Sciatic nerve (tissue), 2 donors: ENCODE measurements at regions of chrX and their contacts with region 1.

Region 1: GRCh38 chrX:100768679-100769338 is 36.9 kb upstream of the SYTL4 start:
- DNase-seq: peak; percentile 92
- ATAC-seq: peak; percentile 61

Region 2: DNA sequence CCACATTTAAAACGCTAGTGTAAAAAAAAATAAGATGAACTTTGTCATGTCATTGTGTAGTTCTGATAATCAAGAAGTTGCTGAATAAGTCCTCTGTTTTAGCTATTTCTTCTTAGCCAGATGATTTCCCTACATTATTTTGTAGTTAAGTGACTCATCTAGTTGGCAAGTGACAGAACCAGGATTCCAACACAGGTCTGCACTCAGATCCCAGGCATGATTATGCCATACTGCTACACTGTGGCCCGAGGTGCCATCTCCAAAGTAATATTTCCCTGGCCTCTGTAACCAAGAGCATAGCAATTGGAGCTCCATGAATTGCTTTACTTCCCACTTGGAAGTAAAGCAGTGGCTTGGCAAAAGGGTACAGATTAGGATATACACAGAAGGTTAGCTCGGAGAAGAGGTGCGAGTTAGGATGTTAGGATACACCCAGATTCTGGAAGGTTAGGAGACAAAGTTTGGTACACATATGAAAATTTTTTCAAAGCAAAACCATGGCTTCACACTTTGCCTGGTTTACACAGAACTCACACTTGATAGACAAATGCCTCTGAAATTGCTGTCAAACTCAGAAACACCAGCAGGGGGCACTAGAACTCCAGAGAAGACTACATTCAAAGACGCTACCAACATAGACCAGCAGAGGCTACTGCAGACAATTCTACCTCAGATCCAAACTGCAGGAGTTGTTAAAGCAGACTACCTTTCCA is 83.4 kb before region 1 on chrX:
- intact Hi-C with region 1: loop called (anchors 5 kb)
- DNase-seq: peak; percentile 73
- ATAC-seq: peak; percentile 88